IMR-90 (cell line): ENCODE measurements at regions of chr2 and their contacts with region 1.

Region 1: DNA sequence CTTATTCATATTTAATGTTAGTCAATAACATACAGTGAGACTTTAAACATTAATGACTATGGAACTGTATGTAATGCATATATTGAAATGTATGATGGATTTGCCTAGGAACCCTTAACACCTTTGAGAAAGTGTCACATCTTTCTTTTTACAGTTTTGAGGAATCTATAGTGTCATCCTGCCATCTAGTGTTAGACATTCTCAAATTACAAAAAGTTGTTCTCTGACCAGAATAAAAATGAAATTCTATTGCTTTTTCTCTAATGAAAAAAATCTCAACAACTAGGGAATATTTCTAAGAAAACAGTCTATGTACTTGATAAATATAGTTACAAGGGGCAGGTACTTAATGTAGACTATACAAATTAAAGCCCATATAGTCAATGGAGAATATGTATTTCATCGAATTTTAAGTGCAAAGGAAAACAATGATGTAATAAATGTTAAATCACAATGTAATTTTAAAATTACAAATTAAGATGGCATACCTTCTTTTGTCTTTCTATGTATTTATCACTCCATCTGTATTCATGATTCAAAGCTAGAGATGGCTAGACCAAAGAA is 5.1 kb upstream of the CALCRL start:
- DNase-seq: peak; percentile 13
- ATAC-seq: no peak
- H3K4me3 ChIP-seq: no peak overlapping the region
- H3K27ac ChIP-seq: no peak overlapping the region
- H3K4me1 ChIP-seq: no peaks in the 10 kb centered on the region
- H3K27me3 ChIP-seq: no peaks in the 10 kb centered on the region
- CTCF ChIP-seq: peak; percentile 59
- POLR2A ChIP-seq: no peak
- RAD21 ChIP-seq: peak; percentile 67

Region 2: GRCh38 chr2:186503848-186504606 is 949.1 kb before region 1 on chr2:
- CTCF ChIA-PET with region 1: no interaction called
- POLR2A ChIA-PET with region 1: no interaction called
- dilution Hi-C with region 1: no loop called
- in situ Hi-C with region 1: loop called (anchors 25 kb)
- intact Hi-C with region 1: loop called (anchors 10 kb)
- DNase-seq: peak; percentile 37
- ATAC-seq: peak; percentile 74; the same call in 1 of the 2 replicates
- H3K4me3 ChIP-seq: no peak overlapping the region
- H3K27ac ChIP-seq: no peak overlapping the region
- H3K4me1 ChIP-seq: no peaks in the 10 kb centered on the region
- H3K27me3 ChIP-seq: no peaks in the 10 kb centered on the region
- CTCF ChIP-seq: peak; percentile 62
- POLR2A ChIP-seq: no peak
- RAD21 ChIP-seq: peak; percentile 73

Region 3: DNA sequence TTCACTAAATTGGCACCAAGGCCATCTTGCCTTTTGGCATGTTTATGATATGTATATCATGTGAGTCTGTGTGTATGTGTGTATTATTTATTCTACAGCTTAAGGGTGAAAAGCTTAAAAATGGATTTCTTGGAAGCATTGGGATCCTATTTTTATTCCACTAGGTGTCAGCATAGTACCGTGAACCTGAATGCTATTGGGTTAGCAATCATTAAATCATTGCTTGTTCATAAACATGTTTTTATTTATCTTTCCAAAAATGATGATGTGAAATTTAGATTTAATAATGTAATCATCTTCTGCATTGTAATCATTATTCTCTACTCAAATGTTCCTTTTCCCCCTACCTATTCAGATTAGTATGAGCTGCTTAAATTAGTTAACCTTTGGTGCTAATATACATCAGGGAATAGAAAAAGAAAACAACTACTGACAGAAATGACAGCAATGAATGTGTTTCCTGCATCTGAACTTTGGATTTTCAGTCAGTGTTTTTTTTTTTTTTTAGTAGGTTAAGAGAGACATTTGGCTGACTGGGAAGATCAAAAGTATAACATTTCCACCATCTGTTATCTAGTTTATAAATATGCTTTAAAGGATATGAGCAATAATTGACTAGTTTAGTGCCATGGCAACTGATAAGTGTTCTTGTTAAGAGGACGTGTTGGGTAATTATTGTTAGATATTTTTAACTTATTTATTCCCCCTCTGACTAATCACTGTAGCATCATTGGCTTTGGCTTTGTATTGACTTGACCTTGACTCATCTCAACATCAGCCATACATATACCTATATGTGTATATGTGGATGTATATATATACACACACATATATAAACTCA is 590.1 kb before region 1 on chr2:
- CTCF ChIA-PET with region 1: interaction called, 5 read pairs
- POLR2A ChIA-PET with region 1: no interaction called
- dilution Hi-C with region 1: no loop called
- in situ Hi-C with region 1: no loop called
- intact Hi-C with region 1: loop called (anchors 2 kb)
- DNase-seq: peak; percentile 35
- ATAC-seq: peak; percentile 79
- H3K4me3 ChIP-seq: no peak overlapping the region
- H3K27ac ChIP-seq: no peak overlapping the region
- H3K4me1 ChIP-seq: no peaks in the 10 kb centered on the region
- H3K27me3 ChIP-seq: peaks cover 2% of the 10 kb centered on the region
- CTCF ChIP-seq: peak; percentile 83
- POLR2A ChIP-seq: no peak
- RAD21 ChIP-seq: peak; percentile 85

Region 4: GRCh38 chr2:186903216-186903615 is 549.9 kb before region 1 on chr2:
- CTCF ChIA-PET with region 1: interaction called, 5 read pairs
- POLR2A ChIA-PET with region 1: no interaction called
- dilution Hi-C with region 1: no loop called
- in situ Hi-C with region 1: no loop called
- intact Hi-C with region 1: loop called (anchors 1 kb)
- DNase-seq: no peak
- ATAC-seq: no peak
- H3K4me3 ChIP-seq: no peak overlapping the region
- H3K27ac ChIP-seq: no peak overlapping the region
- H3K4me1 ChIP-seq: no peaks in the 10 kb centered on the region
- H3K27me3 ChIP-seq: no peaks in the 10 kb centered on the region
- CTCF ChIP-seq: peak; percentile 50
- POLR2A ChIP-seq: no peak
- RAD21 ChIP-seq: peak; percentile 41

Region 5: DNA sequence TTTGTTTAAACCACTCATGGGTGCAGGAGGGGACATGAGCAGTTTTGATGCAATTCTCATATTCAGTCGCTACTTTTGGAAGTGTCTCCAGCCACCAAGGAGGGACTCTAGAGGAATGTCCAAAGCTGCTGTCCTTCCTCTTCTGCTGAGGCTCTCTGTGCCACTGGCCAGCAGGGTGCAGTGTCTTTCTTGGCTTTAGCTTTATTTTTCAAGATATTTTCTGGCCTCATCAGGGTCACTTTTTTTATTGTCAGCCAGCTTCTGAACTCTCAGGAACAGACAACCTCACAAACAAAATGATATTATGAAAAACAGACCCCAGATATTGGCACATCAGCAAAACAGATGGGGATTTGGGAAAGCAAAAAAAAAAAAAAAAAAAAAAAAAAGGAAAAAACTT is 314.9 kb before region 1 on chr2:
- CTCF ChIA-PET with region 1: interaction called, 4 read pairs
- POLR2A ChIA-PET with region 1: interaction called, 18 read pairs
- dilution Hi-C with region 1: no loop called
- in situ Hi-C with region 1: loop called (anchors 25 kb)
- intact Hi-C with region 1: loop called (anchors 1 kb)
- DNase-seq: peak; percentile 21
- ATAC-seq: peak; percentile 65
- H3K4me3 ChIP-seq: no peak overlapping the region
- H3K27ac ChIP-seq: no peak overlapping the region
- H3K4me1 ChIP-seq: no peaks in the 10 kb centered on the region
- H3K27me3 ChIP-seq: no peaks in the 10 kb centered on the region
- CTCF ChIP-seq: peak; percentile 51
- POLR2A ChIP-seq: no peak
- RAD21 ChIP-seq: peak; percentile 35; the same call in 1 of the 2 replicates

Region 6: GRCh38 chr2:187233811-187234210 is 219.3 kb before region 1 on chr2:
- CTCF ChIA-PET with region 1: no interaction called
- POLR2A ChIA-PET with region 1: no interaction called
- dilution Hi-C with region 1: no loop called
- in situ Hi-C with region 1: no loop called
- intact Hi-C with region 1: no loop called
- DNase-seq: no peak
- ATAC-seq: no peak
- H3K4me3 ChIP-seq: no peak overlapping the region
- H3K27ac ChIP-seq: no peak overlapping the region
- H3K4me1 ChIP-seq: no peaks in the 10 kb centered on the region
- H3K27me3 ChIP-seq: no peaks in the 10 kb centered on the region
- CTCF ChIP-seq: no peak
- POLR2A ChIP-seq: no peak
- RAD21 ChIP-seq: no peak